ENCODE measurements at regions of chr16 and their contacts with region 1.

Region 1: GRCh38 chr16:10385725-10386516 is at the start of gene ATF7IP2:
- DNase-seq: peak; percentile 71 to 93 (median 84)
- ATAC-seq: peak; percentile 96 to 97
- H3K4me3 Mint-ChIP-seq: peak within 1 kb of the TSS; percentile 91 to 99 (median 98)
- H3K27ac Mint-ChIP-seq: peak within 1 kb of the TSS; percentile 96 to 99 (median 98)
- H3K4me1 Mint-ChIP-seq: peaks cover 24 to 54% (median 46%) of the 10 kb centered on the region in 4 donors
- H3K27me3 Mint-ChIP-seq: no peaks in the 10 kb centered on the region
- polyA plus RNA-seq, gene ATF7IP2: 121 to 182 (median 175) TPM

Region 2: DNA sequence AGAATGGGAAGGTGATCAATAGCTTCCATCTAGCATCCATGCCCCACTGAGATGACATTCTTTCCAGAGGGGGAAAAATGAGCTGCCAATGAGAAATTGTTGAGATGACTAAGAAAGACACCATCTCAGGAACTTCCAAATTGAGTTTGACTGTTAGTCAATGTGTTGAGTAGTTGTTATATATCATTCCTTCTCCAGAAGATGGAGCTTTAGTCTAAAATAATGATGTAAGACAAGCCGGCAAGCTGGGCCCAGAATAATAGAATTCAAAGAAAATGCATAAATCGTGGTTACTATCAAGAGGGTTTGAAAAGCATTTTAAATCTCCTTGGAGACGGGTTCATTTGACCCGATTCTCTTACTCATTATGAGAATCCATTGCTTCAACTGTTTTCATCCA is 71.1 kb before region 1 on chr16:
- POLR2A ChIA-PET with region 1: interaction called, 10 read pairs
- DNase-seq: peak in 5 of 10 donors; percentile 9 to 62 (median 35)
- ATAC-seq: peak; percentile 40 to 65
- H3K4me3 Mint-ChIP-seq: peak overlapping the region in 1 of 10 donors; percentile 12
- H3K27ac Mint-ChIP-seq: peak overlapping the region in 3 of 10 donors; percentile 17 to 91 (median 23)
- H3K4me1 Mint-ChIP-seq: peaks cover 8 to 27% (median 20%) of the 10 kb centered on the region in 4 donors
- H3K27me3 Mint-ChIP-seq: no peaks in the 10 kb centered on the region

Region 3: DNA sequence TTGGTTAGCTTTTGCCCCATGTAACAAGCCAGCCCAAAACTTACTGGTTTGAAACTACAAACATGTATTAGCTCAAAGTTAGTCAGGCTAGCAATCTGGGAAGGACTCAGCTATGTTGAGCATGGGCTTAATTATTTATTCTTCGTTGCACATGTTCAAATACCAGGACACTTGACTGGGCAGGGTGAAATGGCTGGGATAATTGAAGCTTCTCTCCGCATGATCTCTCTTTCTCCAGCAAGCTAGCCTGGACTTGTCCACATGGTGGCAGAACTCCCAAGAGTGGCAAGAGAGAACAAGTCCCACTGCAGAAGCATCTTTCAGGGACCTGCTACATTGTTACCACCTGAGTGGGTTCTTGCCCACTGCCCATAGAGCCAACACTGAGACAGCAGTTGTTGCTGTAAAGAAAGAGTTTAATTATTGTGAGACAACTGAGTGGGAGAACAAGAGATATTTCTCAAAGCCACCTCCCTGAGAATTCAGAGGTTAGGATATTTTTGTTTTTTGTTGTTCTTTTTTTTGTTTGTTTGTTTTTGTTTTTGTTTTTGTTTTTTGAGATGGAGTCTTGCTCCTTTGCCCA is 16.9 kb before region 1 on chr16:
- POLR2A ChIA-PET with region 1: interaction called, 10 read pairs
- DNase-seq: no peak
- ATAC-seq: no peak
- H3K4me3 Mint-ChIP-seq: no peak overlapping the region
- H3K27ac Mint-ChIP-seq: no peak overlapping the region
- H3K4me1 Mint-ChIP-seq: peaks cover 0 to 2% (median 0%) of the 10 kb centered on the region in 4 donors
- H3K27me3 Mint-ChIP-seq: no peaks in the 10 kb centered on the region

Measured in naive thymus-derived CD8-positive, alpha-beta T cell (primary cell).